ENCODE measurements at regions of chr6 and their contacts with region 1.

Region 1: DNA sequence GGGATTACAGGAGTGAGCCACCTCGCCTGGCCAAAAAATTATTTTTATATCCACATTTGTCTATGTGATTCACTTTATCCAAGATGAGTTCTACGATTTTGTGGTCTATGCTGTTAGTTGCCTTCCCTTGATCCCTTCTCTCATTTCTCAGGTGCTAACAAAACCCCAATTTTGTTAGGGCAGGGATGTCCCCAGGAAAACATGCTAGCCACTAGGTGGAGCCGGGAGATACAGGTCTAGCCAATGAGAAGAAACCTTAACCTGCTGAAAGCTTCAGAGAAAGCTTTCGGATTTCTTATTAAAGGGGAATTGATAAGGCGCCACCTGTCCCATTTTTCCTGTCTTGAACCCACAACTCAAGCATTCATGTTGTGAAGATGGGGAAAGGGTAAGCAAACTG is 167.4 kb upstream of the OLIG3 start:
- DNase-seq: peak in 3 of 5 donors; percentile 40 to 45 (median 45)
- H3K4me3 ChIP-seq: no peak overlapping the region
- H3K4me3 Mint-ChIP-seq: no peak overlapping the region
- H3K27ac ChIP-seq: no peak overlapping the region
- H3K27ac Mint-ChIP-seq: peak overlapping the region in 1 of 7 donors; percentile 51
- H3K4me1 ChIP-seq: no peaks in the 10 kb centered on the region
- H3K4me1 Mint-ChIP-seq: peaks cover 0 to 3% (median under 1%) of the 10 kb centered on the region in 4 donors
- H3K27me3 ChIP-seq: no peaks in the 10 kb centered on the region
- H3K27me3 Mint-ChIP-seq: peaks cover 0 to 4% of the 10 kb centered on the region in 2 donors

Region 2: DNA sequence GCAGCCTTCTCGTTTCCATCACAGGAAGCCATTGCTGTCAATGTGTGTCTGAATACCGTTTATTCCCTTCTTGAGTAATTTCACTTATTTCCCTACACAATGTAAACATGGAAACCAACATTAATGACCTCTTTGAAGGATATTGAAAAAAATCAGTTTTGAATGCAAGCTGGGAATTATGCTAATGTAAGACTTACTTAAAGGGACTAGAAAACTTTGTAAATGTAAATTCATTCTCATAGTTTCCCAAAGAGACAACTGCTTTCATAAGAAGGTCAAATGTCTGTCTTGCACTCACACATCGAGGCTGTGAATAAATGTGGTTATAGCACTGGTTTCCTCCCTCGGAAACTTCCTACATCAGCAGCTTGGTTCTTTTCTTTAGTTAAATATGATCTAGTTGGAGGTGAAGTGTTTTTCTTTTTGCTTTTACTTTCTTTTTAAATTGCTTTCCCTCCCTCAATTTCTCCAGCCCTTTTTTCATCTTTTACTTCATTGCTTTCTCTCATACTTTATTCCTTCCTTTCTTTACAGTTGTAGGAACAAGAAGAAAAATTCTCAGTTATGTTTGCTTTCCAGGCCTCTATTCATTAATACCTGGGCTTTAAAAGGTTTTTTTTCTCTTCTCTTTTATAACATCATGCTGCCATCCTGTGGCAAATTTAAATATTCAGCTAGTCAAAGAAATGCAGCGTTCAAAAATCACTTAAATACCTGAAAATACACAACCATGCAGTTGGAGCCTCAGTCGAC is 313.8 kb after region 1 on chr6:
- CTCF ChIA-PET with region 1: interaction called, 19 read pairs
- POLR2A ChIA-PET with region 1: no interaction called
- intact Hi-C with region 1: loop called (anchors 1 kb)
- DNase-seq: peak; percentile 62 to 71 (median 67)
- H3K4me3 ChIP-seq: no peak overlapping the region
- H3K4me3 Mint-ChIP-seq: peak overlapping the region; percentile 67 to 93 (median 82)
- H3K27ac ChIP-seq: peak overlapping the region; percentile 57
- H3K27ac Mint-ChIP-seq: peak overlapping the region; percentile 87 to 99 (median 97)
- H3K4me1 ChIP-seq: peaks cover 37% of the 10 kb centered on the region
- H3K4me1 Mint-ChIP-seq: peaks cover 30 to 57% (median 34%) of the 10 kb centered on the region in 4 donors
- H3K27me3 ChIP-seq: no peaks in the 10 kb centered on the region
- H3K27me3 Mint-ChIP-seq: no peaks in the 10 kb centered on the region

Region 3: GRCh38 chr6:138007014-138007472 is 345.4 kb after region 1 on chr6:
- CTCF ChIA-PET with region 1: interaction called, 13 read pairs
- POLR2A ChIA-PET with region 1: no interaction called
- intact Hi-C with region 1: no loop called
- DNase-seq: peak in 1 of 5 donors; percentile 3
- H3K4me3 ChIP-seq: no peak overlapping the region
- H3K4me3 Mint-ChIP-seq: no peak overlapping the region
- H3K27ac ChIP-seq: no peak overlapping the region
- H3K27ac Mint-ChIP-seq: peak overlapping the region in 1 of 7 donors; percentile 57
- H3K4me1 ChIP-seq: no peaks in the 10 kb centered on the region
- H3K4me1 Mint-ChIP-seq: no peaks in the 10 kb centered on the region
- H3K27me3 ChIP-seq: no peaks in the 10 kb centered on the region
- H3K27me3 Mint-ChIP-seq: peaks cover 0 to 3% of the 10 kb centered on the region in 2 donors

Region 4: DNA sequence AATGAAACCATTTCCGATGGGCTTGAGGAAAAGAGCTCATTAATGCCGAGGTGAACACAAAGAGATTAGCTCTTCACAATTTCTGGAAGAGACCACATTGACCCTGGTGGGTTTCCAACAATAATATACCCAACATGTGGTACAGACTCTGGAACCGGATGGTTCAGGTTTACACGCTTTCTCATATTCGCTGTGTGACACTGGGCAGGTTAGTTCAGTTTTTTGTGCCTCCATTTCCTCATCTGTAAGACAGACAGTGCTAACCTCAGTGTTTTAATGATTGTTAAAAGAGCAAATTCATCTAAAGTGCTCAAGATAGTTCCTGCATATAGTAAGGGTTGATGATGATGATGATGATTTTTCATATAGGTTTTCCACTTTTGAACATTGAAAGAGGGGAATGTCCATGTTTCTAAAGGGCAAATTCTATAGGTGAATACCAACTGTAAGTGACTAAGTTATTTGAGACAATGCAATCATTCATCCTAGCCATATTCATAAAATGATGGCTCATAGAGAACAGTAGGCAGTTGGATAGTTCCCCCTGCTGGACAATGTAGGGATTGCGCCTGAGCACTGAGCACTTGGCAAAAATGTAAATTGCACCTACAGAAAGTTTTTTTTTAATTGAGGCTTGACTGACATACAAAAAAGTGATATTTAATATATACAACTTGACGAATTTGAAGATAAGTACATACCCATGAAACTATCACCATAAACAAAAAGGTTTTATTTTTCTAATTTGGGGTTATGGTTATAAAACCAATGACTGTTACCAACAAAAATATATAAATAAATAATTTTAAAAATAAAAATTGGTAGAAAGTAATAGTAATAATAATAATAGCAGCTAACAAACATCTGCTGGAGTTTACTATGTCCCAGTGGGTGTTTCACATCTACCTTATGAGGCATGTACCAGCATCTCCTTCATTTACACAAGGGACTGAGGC is 447.7 kb after region 1 on chr6:
- CTCF ChIA-PET with region 1: interaction called, 8 read pairs
- POLR2A ChIA-PET with region 1: no interaction called
- intact Hi-C with region 1: loop called (anchors 1 kb)
- DNase-seq: peak; percentile 69 to 75 (median 75)
- H3K4me3 ChIP-seq: no peak overlapping the region
- H3K4me3 Mint-ChIP-seq: peak overlapping the region in 2 of 8 donors; percentile 52 to 55
- H3K27ac ChIP-seq: no peak overlapping the region
- H3K27ac Mint-ChIP-seq: peak overlapping the region in 3 of 7 donors; percentile 8 to 65 (median 11)
- H3K4me1 ChIP-seq: peaks cover 25% of the 10 kb centered on the region
- H3K4me1 Mint-ChIP-seq: peaks cover 16 to 37% (median 17%) of the 10 kb centered on the region in 4 donors
- H3K27me3 ChIP-seq: no peaks in the 10 kb centered on the region
- H3K27me3 Mint-ChIP-seq: peaks cover 3% of the 10 kb centered on the region in 2 donors

Region 5: DNA sequence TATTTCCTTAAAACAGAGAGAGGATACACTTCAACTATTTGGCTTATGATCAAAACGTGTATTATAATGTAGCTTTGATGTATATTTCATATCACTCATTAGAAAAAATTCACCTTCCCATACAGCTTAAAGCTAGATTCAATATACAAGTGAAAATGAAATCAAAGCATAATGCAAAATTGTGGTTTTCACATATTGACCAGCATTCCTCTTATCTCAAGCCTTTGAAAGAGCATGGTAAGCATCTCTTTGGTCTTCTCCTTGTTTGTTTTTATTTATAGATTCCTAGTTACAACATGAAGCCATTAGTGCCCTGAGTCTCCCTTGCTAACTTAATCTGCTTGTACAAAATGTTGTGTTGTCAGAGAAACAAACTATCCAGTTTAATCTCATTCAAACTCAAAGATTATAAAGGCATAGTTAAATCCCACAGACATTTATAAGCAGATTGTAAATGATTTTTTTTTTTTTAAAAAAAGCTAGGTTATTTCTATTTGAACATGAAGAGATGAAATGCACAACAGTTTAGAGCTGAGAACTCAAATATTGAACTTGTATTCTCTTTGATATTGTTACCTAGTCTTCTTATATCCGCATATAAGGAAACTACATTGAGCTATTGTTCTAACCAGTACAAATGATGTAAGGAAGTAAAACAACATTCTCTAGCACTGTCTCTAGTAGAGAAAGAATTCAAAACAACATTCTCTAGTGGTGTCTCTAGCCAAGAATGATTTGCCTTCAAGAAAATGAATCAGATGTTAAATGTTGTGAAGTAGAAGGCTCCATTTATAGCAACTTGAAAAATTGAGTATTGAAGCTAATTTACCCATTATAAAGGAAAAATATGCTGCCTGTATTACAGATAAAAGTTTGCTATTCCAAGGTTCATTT is 684.9 kb after region 1 on chr6:
- CTCF ChIA-PET with region 1: no interaction called
- POLR2A ChIA-PET with region 1: no interaction called
- intact Hi-C with region 1: no loop called
- DNase-seq: no peak
- H3K4me3 ChIP-seq: no peak overlapping the region
- H3K4me3 Mint-ChIP-seq: no peak overlapping the region
- H3K27ac ChIP-seq: no peak overlapping the region
- H3K27ac Mint-ChIP-seq: no peak overlapping the region
- H3K4me1 ChIP-seq: no peaks in the 10 kb centered on the region
- H3K4me1 Mint-ChIP-seq: peaks cover 0 to 3% (median under 1%) of the 10 kb centered on the region in 4 donors
- H3K27me3 ChIP-seq: no peaks in the 10 kb centered on the region
- H3K27me3 Mint-ChIP-seq: peaks cover 9 to 20% of the 10 kb centered on the region in 2 donors

Region 6: GRCh38 chr6:139308286-139308916 is 1646.8 kb after region 1 on chr6:
- CTCF ChIA-PET with region 1: no interaction called
- POLR2A ChIA-PET with region 1: no interaction called
- intact Hi-C with region 1: no loop called
- DNase-seq: no peak
- H3K4me3 ChIP-seq: no peak overlapping the region
- H3K4me3 Mint-ChIP-seq: no peak overlapping the region
- H3K27ac ChIP-seq: no peak overlapping the region
- H3K27ac Mint-ChIP-seq: no peak overlapping the region
- H3K4me1 ChIP-seq: no peaks in the 10 kb centered on the region
- H3K4me1 Mint-ChIP-seq: peaks cover 3 to 9% (median 7%) of the 10 kb centered on the region in 4 donors
- H3K27me3 ChIP-seq: no peaks in the 10 kb centered on the region
- H3K27me3 Mint-ChIP-seq: no peaks in the 10 kb centered on the region

Measured in CD4-positive, alpha-beta memory T cell (primary cell).